ENCODE measurements at regions of chr14 and their contacts with region 1.

Region 1: DNA sequence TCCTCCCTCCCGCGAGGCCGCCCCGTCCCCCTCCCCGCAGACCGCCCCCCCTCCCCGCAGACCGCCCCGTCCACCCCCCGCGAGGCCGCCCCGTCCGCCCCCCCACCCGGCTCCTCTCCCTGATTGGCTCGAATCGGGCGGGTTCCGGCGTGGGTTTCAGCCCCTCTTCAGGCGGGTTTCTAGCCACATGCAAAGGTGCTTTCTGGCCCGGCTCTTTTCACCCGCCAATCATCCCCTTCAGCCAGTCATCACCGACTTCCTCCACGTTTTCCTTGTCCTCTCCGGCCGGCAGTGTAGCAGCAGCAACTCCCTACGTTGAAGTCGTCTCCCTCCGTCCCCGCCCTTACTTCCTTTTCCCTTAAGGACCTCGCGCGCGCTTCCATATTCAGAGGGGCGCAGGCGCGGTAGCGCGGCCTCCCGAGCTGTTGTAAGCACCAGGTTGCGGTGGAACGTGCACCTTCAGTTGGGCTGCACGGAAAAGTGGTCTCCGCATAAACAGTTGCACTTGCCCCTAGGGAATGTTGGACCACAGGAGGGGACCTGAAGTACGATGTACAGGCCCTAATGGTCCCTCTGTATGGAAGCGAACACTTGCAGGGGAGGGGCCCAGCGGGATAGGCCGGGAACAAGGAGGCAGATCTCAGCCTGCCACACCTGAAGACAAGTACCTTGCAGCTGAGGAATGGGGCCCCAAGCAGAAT is 44.6 kb upstream of the ESR2 start:
- DNase-seq: peak; percentile 82
- H3K4me3 ChIP-seq: peak overlapping the region; percentile 73
- CTCF ChIP-seq: no peak

Region 2: DNA sequence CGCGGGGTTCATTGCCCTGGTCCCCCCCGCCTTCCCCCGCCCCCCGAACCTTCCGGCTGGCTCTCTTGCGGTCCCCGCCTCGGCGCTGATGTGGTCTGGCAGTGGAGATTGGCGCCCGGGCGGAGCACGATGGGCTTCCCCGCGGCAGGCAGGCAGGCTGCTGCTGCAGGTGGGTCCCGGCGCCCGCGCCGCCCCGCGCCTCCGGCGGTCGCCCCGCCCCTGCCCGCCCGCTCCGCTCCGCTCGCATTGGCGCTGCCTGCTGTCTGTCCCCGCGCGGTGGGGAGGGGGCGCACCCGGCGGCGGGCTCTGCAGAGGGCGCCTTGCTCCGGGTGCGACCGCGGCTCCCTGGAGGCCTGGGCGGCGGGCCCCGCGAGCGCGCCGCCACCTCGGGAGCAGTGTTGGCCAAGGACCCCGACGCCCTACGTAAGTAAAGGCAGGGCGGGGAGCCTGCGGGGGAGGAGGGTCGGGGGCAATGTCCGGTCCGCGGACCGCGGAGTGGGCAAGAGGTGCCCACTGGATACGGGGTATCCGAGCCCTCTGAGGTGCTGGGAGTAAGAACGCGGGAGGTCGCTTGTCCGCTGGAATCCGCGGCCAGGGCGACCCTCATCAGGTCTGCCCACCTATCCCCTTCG is 126.5 kb after region 1 on chr14 and contains the start of gene AKAP5:
- CTCF ChIA-PET with region 1: interaction called, 88 read pairs
- POLR2A ChIA-PET with region 1: no interaction called
- DNase-seq: no peak
- H3K4me3 ChIP-seq: peak within 1 kb of the TSS; percentile 74
- CTCF ChIP-seq: no peak

Region 3: DNA sequence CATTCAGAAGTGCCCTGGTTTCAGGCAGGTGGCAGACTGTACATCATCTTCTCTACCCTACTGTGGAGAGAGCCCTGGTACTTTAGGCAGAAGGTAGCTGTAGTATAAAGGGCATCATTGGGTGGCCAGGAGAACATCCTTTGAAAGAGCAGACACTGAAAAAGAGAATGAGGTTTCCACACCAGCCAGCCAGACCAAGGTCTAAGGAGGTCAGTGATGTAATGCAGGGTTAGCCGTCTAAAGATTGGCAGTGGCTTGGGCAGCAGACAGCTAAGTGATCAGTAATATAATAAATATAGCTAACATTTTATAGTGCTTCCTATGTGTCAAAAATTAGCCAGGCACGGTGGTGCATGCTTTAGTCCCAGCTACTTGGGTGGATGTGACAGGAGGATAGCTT is 152.9 kb after region 1 on chr14:
- CTCF ChIA-PET with region 1: interaction called, 76 read pairs
- POLR2A ChIA-PET with region 1: no interaction called
- DNase-seq: no peak
- H3K4me3 ChIP-seq: no peak overlapping the region
- CTCF ChIP-seq: no peak

Region 4: DNA sequence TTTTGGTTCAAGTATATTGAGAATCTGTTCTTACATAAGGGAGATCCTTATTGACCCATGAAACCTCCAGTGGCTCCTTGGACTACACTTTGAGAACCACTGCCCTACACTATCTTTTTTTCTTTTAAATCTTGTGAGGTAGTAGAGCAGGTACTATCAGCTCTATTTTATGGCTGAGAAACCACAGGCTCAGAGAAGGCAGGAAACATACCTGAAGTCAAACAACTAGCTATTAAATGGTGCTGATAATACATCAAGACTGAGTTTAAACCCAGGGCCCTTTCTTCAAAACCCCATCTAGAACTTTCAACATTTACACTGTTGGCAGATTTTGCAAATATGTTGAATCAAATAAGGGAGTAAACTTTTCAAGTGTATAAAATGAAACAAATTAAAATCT is 158.0 kb after region 1 on chr14:
- CTCF ChIA-PET with region 1: interaction called, 14 read pairs
- POLR2A ChIA-PET with region 1: no interaction called
- DNase-seq: no peak
- H3K4me3 ChIP-seq: no peak overlapping the region
- CTCF ChIP-seq: no peak

Region 5: DNA sequence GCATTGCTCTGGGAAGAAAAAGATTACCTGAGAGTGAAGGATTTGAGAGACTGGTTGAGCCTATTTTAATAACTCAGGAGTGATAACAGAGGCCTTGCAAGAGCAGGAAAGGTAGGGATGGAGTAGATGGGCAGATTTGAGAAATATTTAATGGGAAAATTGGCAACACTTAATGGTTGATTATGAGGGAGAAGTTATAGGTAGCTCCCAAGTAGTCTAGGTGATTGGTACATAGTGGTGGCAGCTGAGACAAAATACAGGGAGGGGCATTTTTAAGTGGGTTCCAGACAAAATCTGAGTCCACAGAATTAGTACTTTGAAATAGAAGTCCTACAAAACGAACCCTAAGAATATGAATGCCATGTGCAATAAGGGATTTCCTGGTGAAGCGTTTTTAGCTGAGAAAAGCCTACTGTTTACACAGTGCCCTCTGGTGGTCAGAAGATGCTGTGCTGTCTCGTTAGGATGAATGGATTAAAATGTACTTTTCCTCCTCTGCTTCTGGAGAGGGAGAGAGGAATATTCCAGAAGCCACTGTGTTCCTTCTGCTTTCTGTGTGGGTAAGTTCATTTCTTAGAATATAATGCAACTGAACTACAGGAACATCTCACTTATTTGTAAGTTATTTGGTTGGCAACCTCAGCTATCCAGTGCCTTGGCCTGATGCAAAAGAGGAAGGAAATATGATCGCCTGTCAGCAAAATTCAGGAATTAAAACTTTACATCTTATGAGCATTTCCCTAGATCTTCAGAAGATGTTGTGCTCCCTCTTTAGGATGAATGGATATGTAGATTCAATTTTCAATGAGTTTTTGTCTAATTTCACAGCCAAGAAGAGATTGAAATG is 172.3 kb after region 1 on chr14:
- CTCF ChIA-PET with region 1: interaction called, 26 read pairs
- POLR2A ChIA-PET with region 1: no interaction called
- DNase-seq: no peak
- H3K4me3 ChIP-seq: no peak overlapping the region
- CTCF ChIP-seq: peak; percentile 78